ENCODE measurements at regions of chr1 and their contacts with region 1.

Region 1: DNA sequence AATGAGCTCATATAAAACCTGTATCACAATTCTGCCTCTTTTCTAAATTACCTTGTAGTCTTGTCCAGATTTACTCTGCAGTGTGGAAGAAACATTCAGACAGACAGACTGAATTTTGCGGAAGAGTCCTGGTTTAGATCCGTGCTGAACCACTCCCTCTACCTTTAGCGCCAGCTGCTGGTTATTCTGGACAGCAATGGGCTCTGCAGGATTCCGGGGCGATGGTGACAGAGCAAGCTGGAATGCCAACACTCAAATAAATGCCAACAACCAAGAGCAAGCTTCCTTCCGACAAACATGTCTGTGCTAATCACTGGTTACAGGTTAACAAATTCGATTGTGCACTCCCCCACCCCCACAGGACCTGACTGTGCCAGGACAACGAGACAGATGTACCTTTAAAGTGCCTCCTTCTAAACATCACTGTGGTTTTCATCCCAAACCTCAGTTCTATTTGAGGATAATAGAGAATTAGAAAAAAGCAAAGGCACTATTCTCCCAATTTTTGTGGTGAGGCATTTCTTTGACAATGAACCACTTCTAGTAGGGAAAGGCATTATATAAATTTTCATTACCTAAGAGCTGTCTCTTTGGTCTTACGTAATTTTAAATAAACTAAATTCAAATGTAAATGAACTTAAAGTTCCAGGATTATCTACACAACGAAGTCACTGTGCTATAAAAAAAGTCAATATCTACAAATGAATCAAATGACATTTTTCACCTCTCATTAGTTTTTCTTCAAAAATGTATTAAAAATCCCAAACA is 90.4 kb downstream of the INTS7 start:
- DNase-seq: no peak
- H3K4me3 ChIP-seq: no peak overlapping the region
- H3K27ac ChIP-seq: no peak overlapping the region
- H3K4me1 ChIP-seq: no peaks in the 10 kb centered on the region
- H3K27me3 ChIP-seq: no peaks in the 10 kb centered on the region
- CTCF ChIP-seq: peak in 2 of 4 experiments; percentile 15 to 34
- EP300 ChIP-seq: no peak
- POLR2A ChIP-seq: no peak

Region 2: GRCh38 chr1:211680752-211681327 is 264.1 kb before region 1 on chr1:
- intact Hi-C with region 1: loop called (anchors 10 kb)
- DNase-seq: peak; percentile 78
- H3K4me3 ChIP-seq: no peak overlapping the region
- H3K27ac ChIP-seq: no peak overlapping the region
- H3K4me1 ChIP-seq: peaks cover 0 to 3% (median 3%) of the 10 kb centered on the region in 4 donors
- H3K27me3 ChIP-seq: no peaks in the 10 kb centered on the region
- CTCF ChIP-seq: peak; percentile 55 to 70 (median 66)
- EP300 ChIP-seq: no peak
- POLR2A ChIP-seq: no peak

Region 3: DNA sequence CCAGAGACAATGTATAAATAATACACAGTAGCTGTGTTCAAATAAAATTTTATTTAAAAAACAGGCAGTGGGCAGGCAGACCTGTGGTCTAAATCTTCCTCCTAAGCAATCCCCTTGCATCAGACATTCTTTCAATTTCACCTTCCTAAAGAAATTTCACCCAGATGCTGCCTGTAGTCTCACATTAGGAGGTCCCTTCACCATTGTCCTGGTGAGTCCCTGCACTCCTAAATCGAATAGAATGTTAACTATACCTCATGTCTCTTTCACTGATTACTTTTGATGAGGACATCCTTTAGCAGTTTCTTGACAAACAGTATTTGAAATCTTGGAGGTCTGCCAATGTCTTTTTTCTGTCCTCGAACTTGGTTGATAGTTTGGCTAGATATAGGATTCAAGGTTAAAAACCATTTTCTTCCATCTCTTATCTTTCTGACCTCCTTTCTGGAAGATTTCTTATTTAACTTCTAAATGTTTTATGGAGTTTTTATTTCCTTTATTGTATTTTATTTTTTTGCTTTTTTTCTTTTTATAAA is 191.9 kb before region 1 on chr1:
- intact Hi-C with region 1: no loop called
- DNase-seq: no peak
- H3K4me3 ChIP-seq: no peak overlapping the region
- H3K27ac ChIP-seq: no peak overlapping the region
- H3K4me1 ChIP-seq: no peaks in the 10 kb centered on the region
- H3K27me3 ChIP-seq: no peaks in the 10 kb centered on the region
- CTCF ChIP-seq: no peak
- EP300 ChIP-seq: no peak
- POLR2A ChIP-seq: no peak

Measured in sigmoid colon (tissue), 7 donors.